Sigmoid colon (tissue), 7 donors: ENCODE measurements at regions of chr4 and their contacts with region 1.

Region 1: DNA sequence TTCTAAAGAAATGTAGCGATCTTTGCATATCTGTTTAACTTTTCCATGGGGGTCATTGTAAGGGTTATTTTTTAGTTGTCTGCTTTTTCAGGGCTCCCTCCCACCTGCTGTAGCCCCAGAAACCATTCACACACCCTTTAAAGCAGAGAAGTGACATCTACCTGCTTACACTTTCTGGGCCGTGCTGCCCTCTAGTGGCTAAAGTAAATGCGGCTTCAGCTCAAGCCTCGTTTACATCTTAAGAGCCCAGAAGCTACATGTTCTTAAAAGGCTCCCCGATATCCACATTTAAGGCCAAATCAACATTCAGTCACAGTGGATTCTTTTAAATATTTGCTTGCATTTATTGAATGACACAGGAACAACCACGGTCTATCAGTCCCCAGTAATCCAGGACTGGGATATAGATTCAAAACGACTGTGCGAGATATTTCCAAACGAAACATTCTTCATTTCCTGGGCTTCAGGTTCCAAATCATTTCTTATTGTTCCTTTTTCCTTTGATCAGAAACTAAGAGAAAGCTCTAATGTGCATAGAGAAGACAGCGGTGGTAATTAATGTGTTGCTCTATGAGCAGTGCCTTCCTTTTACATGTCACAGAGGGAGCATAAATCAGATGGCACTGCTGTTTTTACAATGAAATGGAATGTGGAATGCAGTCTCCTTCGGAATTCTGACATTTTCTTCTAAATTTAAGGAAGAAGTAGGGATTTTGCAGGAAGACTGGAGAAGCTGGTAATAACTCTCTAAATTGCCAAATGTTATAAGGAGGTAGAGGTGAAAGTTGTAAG is 119.9 kb downstream of the RASGEF1B start:
- DNase-seq: peak; percentile 77
- H3K4me3 ChIP-seq: no peak overlapping the region
- H3K27ac ChIP-seq: no peak overlapping the region
- H3K4me1 ChIP-seq: no peaks in the 10 kb centered on the region
- H3K27me3 ChIP-seq: no peaks in the 10 kb centered on the region
- CTCF ChIP-seq: peak; percentile 25 to 85 (median 68)
- EP300 ChIP-seq: no peak
- POLR2A ChIP-seq: no peak

Region 2: GRCh38 chr4:81069706-81070331 is 282.0 kb before region 1 on chr4:
- intact Hi-C with region 1: loop called (anchors 5 kb)
- DNase-seq: peak; percentile 76
- H3K4me3 ChIP-seq: no peak overlapping the region
- H3K27ac ChIP-seq: no peak overlapping the region
- H3K4me1 ChIP-seq: peaks cover 0 to 4% (median 0%) of the 10 kb centered on the region in 4 donors
- H3K27me3 ChIP-seq: no peaks in the 10 kb centered on the region
- CTCF ChIP-seq: peak; percentile 48 to 85 (median 74)
- EP300 ChIP-seq: no peak
- POLR2A ChIP-seq: no peak